CD14-positive monocyte (primary cell): ENCODE measurements at regions of chr12 and their contacts with region 1.

Region 1: DNA sequence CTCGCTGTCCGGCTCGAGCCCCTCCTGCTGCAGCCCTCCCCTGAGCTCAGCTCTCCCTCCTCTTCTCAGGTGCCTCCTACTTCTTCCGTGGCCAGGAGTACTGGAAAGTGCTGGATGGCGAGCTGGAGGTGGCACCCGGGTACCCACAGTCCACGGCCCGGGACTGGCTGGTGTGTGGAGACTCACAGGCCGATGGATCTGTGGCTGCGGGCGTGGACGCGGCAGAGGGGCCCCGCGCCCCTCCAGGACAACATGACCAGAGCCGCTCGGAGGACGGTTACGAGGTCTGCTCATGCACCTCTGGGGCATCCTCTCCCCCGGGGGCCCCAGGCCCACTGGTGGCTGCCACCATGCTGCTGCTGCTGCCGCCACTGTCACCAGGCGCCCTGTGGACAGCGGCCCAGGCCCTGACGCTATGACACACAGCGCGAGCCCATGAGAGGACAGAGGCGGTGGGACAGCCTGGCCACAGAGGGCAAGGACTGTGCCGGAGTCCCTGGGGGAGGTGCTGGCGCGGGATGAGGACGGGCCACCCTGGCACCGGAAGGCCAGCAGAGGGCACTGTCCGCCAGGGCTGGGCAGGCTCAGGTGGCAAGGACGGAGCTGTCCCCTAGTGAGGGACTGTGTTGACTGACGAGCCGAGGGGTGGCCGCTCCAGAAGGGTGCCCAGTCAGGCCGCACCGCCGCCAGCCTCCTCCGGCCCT is 22.8 kb downstream of the MMP17 start:
- DNase-seq: peak; percentile 45 to 65 (median 54)
- H3K4me3 ChIP-seq: no peak overlapping the region
- H3K4me3 Mint-ChIP-seq: no peak overlapping the region
- H3K27ac ChIP-seq: no peak overlapping the region
- H3K27ac Mint-ChIP-seq: no peak overlapping the region
- H3K4me1 ChIP-seq: peaks cover 13 to 18% of the 10 kb centered on the region in 2 donors
- H3K4me1 Mint-ChIP-seq: peaks cover 12% of the 10 kb centered on the region
- H3K27me3 ChIP-seq: no peaks in the 10 kb centered on the region
- H3K27me3 Mint-ChIP-seq: peaks cover 4 to 7% (median 6%) of the 10 kb centered on the region in 3 donors
- CTCF ChIP-seq: peak; percentile 75

Region 2: DNA sequence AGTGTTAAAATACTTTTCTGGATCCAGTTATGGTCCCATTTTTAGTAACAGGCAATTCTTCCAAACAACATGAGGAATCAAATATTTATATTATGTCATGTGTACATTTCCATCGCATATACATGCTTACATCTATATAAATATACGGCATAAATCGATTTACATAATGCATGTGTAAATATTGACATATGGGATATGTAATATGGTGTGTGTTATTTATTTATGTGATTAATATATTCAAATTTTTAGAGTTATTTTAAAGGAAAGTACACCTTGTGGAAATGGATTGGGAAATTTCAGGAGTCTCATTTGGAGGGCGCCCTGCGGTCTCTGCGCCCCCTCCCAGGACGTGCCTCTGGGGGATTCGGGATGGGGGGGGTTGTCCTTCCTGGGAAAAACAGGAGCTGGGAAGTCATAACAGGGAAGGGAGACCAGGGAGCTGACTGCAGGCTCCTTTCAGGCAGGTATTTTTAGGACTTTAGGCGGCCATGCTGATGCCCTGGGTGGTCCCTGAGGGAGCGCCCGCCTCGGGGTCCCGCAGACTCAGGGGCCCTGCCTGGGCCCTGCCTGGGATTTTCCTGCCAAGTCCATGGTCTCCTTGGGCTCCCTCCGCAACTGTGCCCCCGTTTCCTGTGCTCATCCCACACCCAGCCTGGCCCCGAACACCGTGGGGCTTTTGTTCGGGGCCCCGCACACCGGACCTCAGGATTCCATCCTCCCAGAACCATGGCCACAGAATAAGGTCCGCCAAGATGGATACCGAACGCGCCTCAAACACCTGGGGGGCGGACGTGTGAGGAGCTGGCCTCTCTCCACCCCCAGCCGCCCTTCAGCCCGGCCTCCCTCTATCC is 222.8 kb before region 1 on chr12:
- intact Hi-C with region 1: no loop called
- DNase-seq: no peak
- H3K4me3 ChIP-seq: no peak overlapping the region
- H3K4me3 Mint-ChIP-seq: no peak overlapping the region
- H3K27ac ChIP-seq: no peak overlapping the region
- H3K27ac Mint-ChIP-seq: no peak overlapping the region
- H3K4me1 ChIP-seq: peaks cover 5 to 10% of the 10 kb centered on the region in 2 donors
- H3K4me1 Mint-ChIP-seq: peaks cover 7% of the 10 kb centered on the region
- H3K27me3 ChIP-seq: peaks cover 0 to 33% of the 10 kb centered on the region in 2 donors
- H3K27me3 Mint-ChIP-seq: peaks cover 28 to 66% (median 51%) of the 10 kb centered on the region in 3 donors
- CTCF ChIP-seq: no peak

Region 3: DNA sequence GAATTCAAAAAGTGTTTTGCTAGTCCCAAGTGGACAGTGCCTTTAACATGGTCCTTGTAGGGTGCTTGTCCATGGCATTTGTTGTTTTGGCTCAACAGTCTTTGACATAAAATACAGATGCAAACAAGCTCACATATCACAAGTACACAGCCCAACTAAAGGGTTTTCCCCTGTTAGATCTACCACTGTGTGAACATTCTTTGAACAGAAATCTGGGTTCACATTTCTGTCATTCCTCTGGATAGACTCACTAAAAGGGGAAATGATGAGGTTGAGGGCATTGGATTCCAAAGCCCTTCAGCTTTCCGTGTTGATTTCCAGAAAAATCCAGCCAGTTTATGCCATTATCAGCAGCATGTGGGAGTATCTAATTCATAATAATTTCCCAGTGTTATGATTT is 152.8 kb after region 1 on chr12:
- intact Hi-C with region 1: loop called in 1 of 2 experiments (anchors 5 kb)
- DNase-seq: no peak
- H3K4me3 ChIP-seq: no peak overlapping the region
- H3K4me3 Mint-ChIP-seq: no peak overlapping the region
- H3K27ac ChIP-seq: no peak overlapping the region
- H3K27ac Mint-ChIP-seq: no peak overlapping the region
- H3K4me1 ChIP-seq: no peaks in the 10 kb centered on the region
- H3K4me1 Mint-ChIP-seq: peaks cover 4% of the 10 kb centered on the region
- H3K27me3 ChIP-seq: no peaks in the 10 kb centered on the region
- H3K27me3 Mint-ChIP-seq: peaks cover 0 to 1% (median 0%) of the 10 kb centered on the region in 3 donors
- CTCF ChIP-seq: no peak

Region 4: GRCh38 chr12:132132609-132133430 is 281.8 kb after region 1 on chr12:
- intact Hi-C with region 1: no loop called
- DNase-seq: no peak
- H3K4me3 ChIP-seq: no peak overlapping the region
- H3K4me3 Mint-ChIP-seq: no peak overlapping the region
- H3K27ac ChIP-seq: no peak overlapping the region
- H3K27ac Mint-ChIP-seq: no peak overlapping the region
- H3K4me1 ChIP-seq: no peaks in the 10 kb centered on the region
- H3K4me1 Mint-ChIP-seq: no peaks in the 10 kb centered on the region
- H3K27me3 ChIP-seq: no peaks in the 10 kb centered on the region
- H3K27me3 Mint-ChIP-seq: peaks cover 0 to 5% (median 0%) of the 10 kb centered on the region in 3 donors
- CTCF ChIP-seq: no peak